Left cardiac atrium (tissue), 4 donors: ENCODE measurements at regions of chr5 and their contacts with region 1.

Region 1: DNA sequence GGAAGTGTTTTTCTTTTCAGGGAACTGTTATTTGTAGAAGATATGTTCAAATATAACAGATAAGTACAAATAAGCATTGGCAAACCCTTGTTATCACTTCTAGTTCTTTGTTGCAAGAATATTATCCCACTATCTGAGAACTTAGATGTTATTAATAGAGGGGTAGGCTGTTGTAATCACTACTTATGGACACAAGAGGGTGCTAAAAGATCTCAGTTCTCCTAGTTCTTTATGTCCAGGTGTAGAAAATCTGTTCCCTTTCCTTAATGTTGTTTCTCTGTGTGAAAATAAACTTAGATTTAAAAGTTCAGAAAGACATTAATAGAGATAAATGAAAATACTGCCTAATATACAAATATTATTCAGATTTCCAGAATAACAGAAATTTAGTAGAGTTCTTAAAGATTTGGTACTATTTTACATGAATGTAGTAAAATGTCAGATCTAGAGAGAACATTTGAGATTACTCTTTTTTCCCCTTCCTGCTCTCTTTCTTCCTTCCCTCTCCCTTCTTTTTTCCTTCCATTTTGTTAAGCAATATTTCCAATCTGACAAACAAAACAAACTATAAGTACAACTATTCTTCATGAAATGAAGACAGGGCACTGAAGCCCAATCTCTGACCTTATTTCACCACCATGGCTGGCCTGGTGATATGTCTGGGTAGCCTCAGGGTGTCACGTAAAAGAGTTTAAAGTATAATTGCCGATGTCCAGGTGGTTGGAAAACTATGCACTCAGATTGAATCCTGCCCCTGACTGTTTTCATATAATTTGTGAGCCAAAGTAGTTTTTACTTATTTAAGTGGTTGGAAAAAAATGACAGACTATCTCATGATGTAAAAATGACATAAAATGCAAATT is 43.6 kb upstream of the C5orf46 start:
- DNase-seq: no peak
- ATAC-seq: peak in 1 of 2 donors; percentile 41

Region 2: DNA sequence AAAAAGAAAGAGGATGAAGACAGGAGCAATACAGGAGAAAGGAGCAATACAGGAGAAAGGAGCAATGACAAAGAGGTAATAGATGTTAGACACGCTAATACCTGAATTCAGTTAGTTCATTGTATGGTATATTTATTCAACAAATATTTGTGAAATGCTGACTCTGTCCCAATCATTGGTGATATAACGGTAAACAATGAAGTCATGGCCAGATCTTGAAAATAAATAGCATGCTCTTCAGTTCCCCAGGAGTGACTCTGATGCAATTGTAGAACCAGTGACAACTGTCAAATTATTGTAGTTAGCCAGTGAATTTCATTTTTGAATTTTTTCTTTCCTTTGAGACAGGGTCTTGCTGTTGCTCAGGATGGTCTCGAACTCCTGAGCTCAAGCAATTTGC is 170.4 kb after region 1 on chr5:
- intact Hi-C with region 1: loop called in 1 of 2 experiments (anchors 5 kb)
- DNase-seq: no peak
- ATAC-seq: no peak